Endothelial cell of umbilical vein (primary cell): ENCODE measurements at regions of chr2 and their contacts with region 1.

Region 1: GRCh38 chr2:214830794-214831346 is 21.4 kb upstream of the BARD1 start:
- DNase-seq: peak; percentile 40
- H3K4me3 ChIP-seq: no peak overlapping the region
- H3K27ac ChIP-seq: no peak overlapping the region
- H3K4me1 ChIP-seq: no peaks in the 10 kb centered on the region
- H3K27me3 ChIP-seq: peaks cover 0 to 6% of the 10 kb centered on the region in 2 experiments
- CTCF ChIP-seq: peak in 1 of 2 donors; percentile 35
- POLR2A ChIP-seq: no peak

Region 2: DNA sequence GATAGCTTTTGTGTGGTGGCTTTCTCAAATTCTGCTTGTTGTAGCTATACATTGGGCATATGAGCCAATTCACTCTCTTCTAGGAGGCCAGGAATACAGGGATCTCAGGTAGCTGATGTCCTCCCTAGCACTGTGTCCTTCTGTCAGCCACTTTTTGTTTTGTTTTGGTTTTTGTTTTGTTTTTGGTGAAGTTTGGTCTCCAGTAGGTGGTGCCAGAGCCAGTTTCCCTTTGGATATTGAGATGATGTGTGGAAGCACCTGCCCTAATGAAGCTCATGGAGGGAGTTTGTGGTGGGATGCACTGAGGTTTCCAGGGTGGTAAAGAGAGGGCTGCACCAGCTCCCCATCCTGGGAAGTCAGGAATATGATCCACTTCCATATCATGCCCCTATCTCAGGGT is 520.6 kb before region 1 on chr2:
- CTCF ChIA-PET with region 1: interaction called, 13 read pairs
- POLR2A ChIA-PET with region 1: no interaction called
- dilution Hi-C with region 1: no loop called
- intact Hi-C with region 1: no loop called
- DNase-seq: no peak
- H3K4me3 ChIP-seq: no peak overlapping the region
- H3K27ac ChIP-seq: no peak overlapping the region
- H3K4me1 ChIP-seq: no peaks in the 10 kb centered on the region
- H3K27me3 ChIP-seq: no peaks in the 10 kb centered on the region
- CTCF ChIP-seq: peak in 1 of 2 donors; percentile 14
- POLR2A ChIP-seq: no peak

Region 3: GRCh38 chr2:214436470-214436869 is 394.4 kb before region 1 on chr2:
- CTCF ChIA-PET with region 1: no interaction called
- POLR2A ChIA-PET with region 1: no interaction called
- dilution Hi-C with region 1: no loop called
- intact Hi-C with region 1: loop called (anchors 10 kb)
- DNase-seq: no peak
- H3K4me3 ChIP-seq: no peak overlapping the region
- H3K27ac ChIP-seq: no peak overlapping the region
- H3K4me1 ChIP-seq: no peaks in the 10 kb centered on the region
- H3K27me3 ChIP-seq: no peaks in the 10 kb centered on the region
- CTCF ChIP-seq: no peak
- POLR2A ChIP-seq: no peak

Region 4: DNA sequence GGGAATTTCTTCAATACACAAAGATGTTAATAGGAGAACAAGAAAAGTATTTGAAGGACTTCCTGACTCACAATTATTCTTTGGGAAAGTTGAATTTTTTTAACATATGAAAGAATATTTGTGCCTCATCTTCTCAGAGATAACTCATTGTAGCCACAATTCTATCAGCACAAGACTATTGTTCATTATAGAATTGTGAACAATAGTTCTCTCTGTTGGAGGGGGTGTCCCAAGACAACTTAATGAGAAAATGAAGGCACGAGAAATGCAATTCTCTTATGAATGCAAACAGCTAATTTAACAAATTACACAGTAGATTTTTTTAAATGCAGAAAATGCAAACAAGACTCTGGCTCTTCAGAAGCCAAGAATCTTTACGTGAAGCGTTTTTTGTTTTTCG is 178.4 kb before region 1 on chr2:
- CTCF ChIA-PET with region 1: no interaction called
- POLR2A ChIA-PET with region 1: no interaction called
- dilution Hi-C with region 1: no loop called
- intact Hi-C with region 1: no loop called
- DNase-seq: no peak
- H3K4me3 ChIP-seq: no peak overlapping the region
- H3K27ac ChIP-seq: no peak overlapping the region
- H3K4me1 ChIP-seq: no peaks in the 10 kb centered on the region
- H3K27me3 ChIP-seq: no peaks in the 10 kb centered on the region
- CTCF ChIP-seq: no peak
- POLR2A ChIP-seq: no peak

Region 5: DNA sequence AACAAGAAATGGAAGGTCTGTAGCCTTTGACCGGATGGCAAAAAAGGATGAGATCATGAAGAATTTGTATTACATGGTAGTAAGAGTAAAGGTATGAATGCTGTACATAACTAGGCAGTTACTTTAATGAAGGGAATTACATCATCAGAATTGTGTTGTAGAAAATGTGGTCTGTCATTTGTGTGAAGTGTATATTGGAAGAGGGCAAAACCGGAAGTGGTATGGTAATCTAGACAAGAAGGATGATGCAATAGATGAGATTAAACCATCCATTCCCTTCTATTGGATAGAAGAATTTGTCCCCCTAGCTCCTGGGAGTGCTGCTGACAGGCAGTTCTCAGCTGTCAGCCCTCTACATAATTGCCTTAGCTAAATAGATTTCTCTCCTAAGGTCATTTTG is 34.5 kb after region 1 on chr2:
- CTCF ChIA-PET with region 1: no interaction called
- POLR2A ChIA-PET with region 1: no interaction called
- dilution Hi-C with region 1: no loop called
- intact Hi-C with region 1: no loop called
- DNase-seq: no peak
- H3K4me3 ChIP-seq: no peak overlapping the region
- H3K27ac ChIP-seq: no peak overlapping the region
- H3K4me1 ChIP-seq: no peaks in the 10 kb centered on the region
- H3K27me3 ChIP-seq: no peaks in the 10 kb centered on the region
- CTCF ChIP-seq: no peak
- POLR2A ChIP-seq: no peak

Region 6: DNA sequence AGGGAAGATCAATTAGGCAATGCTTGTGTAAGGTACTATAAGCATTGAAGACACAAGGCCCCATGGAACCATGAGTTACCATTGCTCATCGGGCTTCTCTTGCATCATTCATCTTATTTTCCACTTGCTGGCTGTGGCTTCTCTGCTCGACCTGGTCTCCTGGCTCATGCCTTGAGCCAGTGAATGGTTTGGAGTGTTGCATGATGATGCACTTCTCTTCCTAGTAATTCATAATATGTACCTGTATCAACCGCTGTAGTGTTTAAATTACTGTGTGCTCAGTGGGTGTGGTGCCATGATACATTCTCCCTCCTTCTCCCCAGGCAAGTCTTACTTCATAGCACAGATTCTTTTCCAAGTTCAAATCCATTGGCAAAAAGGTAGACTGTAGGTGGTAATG is 240.8 kb after region 1 on chr2:
- CTCF ChIA-PET with region 1: no interaction called
- POLR2A ChIA-PET with region 1: no interaction called
- dilution Hi-C with region 1: no loop called
- intact Hi-C with region 1: no loop called
- DNase-seq: no peak
- H3K4me3 ChIP-seq: no peak overlapping the region
- H3K27ac ChIP-seq: no peak overlapping the region
- H3K4me1 ChIP-seq: no peaks in the 10 kb centered on the region
- H3K27me3 ChIP-seq: no peaks in the 10 kb centered on the region
- CTCF ChIP-seq: no peak
- POLR2A ChIP-seq: no peak